BJ (cell line): ENCODE measurements at regions of chr10 and their contacts with region 1.

Region 1: GRCh38 chr10:47340608-47341170 is 7.5 kb upstream of the RBP3 start:
- DNase-seq: no peak
- H3K4me3 ChIP-seq: no peak overlapping the region
- H3K27me3 ChIP-seq: peaks cover 10% of the 10 kb centered on the region
- CTCF ChIP-seq: peak; percentile 97

Region 2: GRCh38 chr10:47351899-47352815 is 11.5 kb after region 1 on chr10:
- CTCF ChIA-PET with region 1: interaction called, 17 read pairs
- POLR2A ChIA-PET with region 1: no interaction called
- DNase-seq: no peak
- H3K4me3 ChIP-seq: no peak overlapping the region
- H3K27me3 ChIP-seq: peaks cover 6% of the 10 kb centered on the region; the same call in 1 of the 2 replicates
- CTCF ChIP-seq: no peak

Region 3: GRCh38 chr10:47396311-47396729 is 55.6 kb after region 1 on chr10:
- CTCF ChIA-PET with region 1: no interaction called
- POLR2A ChIA-PET with region 1: no interaction called
- DNase-seq: no peak
- H3K4me3 ChIP-seq: no peak overlapping the region
- H3K27me3 ChIP-seq: no peaks in the 10 kb centered on the region
- CTCF ChIP-seq: no peak

Region 4: GRCh38 chr10:47409171-47409865 is 68.6 kb after region 1 on chr10:
- CTCF ChIA-PET with region 1: no interaction called
- POLR2A ChIA-PET with region 1: no interaction called
- DNase-seq: no peak
- H3K4me3 ChIP-seq: no peak overlapping the region
- H3K27me3 ChIP-seq: no peaks in the 10 kb centered on the region
- CTCF ChIP-seq: no peak